ENCODE measurements at regions of chr1 and their contacts with region 1.

Region 1: GRCh38 chr1:201703621-201704439 is 125.1 kb upstream of the IPO9 start:
- DNase-seq: peak; percentile 90
- H3K4me3 Mint-ChIP-seq: no peak overlapping the region
- H3K27ac Mint-ChIP-seq: peak overlapping the region; percentile 16
- H3K4me1 Mint-ChIP-seq: peaks cover 25% of the 10 kb centered on the region
- H3K27me3 Mint-ChIP-seq: no peaks in the 10 kb centered on the region
- CTCF ChIP-seq: peak; percentile 100

Region 2: GRCh38 chr1:201530741-201531531 is 172.9 kb before region 1 on chr1:
- CTCF ChIA-PET with region 1: interaction called, 241 read pairs
- POLR2A ChIA-PET with region 1: interaction called, 5 read pairs
- intact Hi-C with region 1: loop called (anchors 1 kb)
- DNase-seq: peak; percentile 91
- H3K4me3 Mint-ChIP-seq: no peak overlapping the region
- H3K27ac Mint-ChIP-seq: peak overlapping the region; percentile 46
- H3K4me1 Mint-ChIP-seq: peaks cover 9% of the 10 kb centered on the region
- H3K27me3 Mint-ChIP-seq: no peaks in the 10 kb centered on the region
- CTCF ChIP-seq: peak; percentile 99

Region 3: GRCh38 chr1:201570886-201571624 is 132.8 kb before region 1 on chr1:
- CTCF ChIA-PET with region 1: interaction called, 779 read pairs
- POLR2A ChIA-PET with region 1: no interaction called
- intact Hi-C with region 1: no loop called
- DNase-seq: no peak
- H3K4me3 Mint-ChIP-seq: no peak overlapping the region
- H3K27ac Mint-ChIP-seq: no peak overlapping the region
- H3K4me1 Mint-ChIP-seq: peaks cover 5% of the 10 kb centered on the region
- H3K27me3 Mint-ChIP-seq: no peaks in the 10 kb centered on the region
- CTCF ChIP-seq: no peak

Region 4: DNA sequence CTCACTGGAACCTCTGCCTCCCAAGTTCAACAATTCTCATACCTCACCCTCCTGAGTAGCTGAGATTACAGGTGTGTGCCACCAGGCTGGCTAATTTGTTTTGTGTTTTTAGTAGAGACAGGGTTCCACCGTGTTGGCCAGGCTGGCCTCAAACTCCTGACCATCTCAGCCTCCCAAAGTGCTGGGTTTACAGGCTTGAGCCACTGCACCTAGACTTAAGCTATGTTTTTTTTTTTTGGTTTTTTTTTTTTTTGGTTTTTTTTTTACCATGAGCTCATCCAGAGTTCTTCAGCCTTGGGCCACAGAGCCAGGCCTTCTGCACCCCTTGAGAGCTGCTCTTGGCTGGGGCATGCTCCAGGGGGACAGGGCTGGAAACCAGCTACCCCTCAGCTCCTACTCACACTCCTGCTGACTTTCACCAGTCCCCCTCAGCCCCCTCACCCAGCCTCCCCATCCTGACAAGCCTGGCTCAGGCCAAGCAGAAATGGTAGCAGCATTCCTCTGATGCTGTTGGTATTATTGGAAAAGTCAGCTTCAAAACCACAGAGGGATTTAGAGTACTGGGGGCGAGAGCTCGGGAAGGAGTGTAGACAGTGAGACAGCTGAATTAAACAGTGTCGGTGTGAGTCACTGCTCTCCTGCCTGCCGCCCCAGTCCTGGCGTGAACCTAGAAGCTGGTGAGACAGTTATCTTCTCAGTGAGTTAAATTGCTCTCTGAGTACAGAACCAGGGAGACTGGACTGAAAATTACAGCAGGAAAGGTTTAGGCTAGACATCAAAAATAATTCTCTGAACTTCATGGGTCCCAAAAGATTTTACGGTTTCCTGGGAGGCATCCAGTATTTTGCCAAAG is 101.2 kb before region 1 on chr1:
- CTCF ChIA-PET with region 1: interaction called, 21 read pairs
- POLR2A ChIA-PET with region 1: no interaction called
- intact Hi-C with region 1: no loop called
- DNase-seq: peak; percentile 92
- H3K4me3 Mint-ChIP-seq: no peak overlapping the region
- H3K27ac Mint-ChIP-seq: no peak overlapping the region
- H3K4me1 Mint-ChIP-seq: peaks cover 37% of the 10 kb centered on the region
- H3K27me3 Mint-ChIP-seq: no peaks in the 10 kb centered on the region
- CTCF ChIP-seq: no peak

Region 5: DNA sequence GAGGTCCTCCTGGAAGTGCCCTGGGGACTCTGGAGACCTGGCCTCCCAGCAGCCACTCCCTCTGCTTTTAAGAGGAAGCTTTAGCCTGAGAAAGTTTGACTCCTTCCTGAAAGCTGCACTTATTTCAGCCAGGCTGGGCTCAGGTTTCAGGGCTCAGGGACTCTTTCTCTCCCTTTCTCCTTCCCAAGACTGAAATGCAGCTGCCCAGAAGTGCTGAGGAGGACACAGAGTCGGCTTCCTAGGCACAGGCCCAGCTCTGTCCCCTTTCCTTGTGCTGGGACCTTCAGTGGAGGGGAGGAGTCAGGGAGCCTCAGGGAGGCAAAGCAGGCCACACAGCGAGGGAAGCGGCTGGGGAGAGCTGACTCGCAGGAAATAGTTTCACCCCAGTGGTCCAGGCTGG is 27.6 kb before region 1 on chr1:
- CTCF ChIA-PET with region 1: interaction called, 15 read pairs
- POLR2A ChIA-PET with region 1: no interaction called
- intact Hi-C with region 1: no loop called
- DNase-seq: peak; percentile 42
- H3K4me3 Mint-ChIP-seq: no peak overlapping the region
- H3K27ac Mint-ChIP-seq: no peak overlapping the region
- H3K4me1 Mint-ChIP-seq: peaks cover 6% of the 10 kb centered on the region
- H3K27me3 Mint-ChIP-seq: no peaks in the 10 kb centered on the region
- CTCF ChIP-seq: no peak

Region 6: GRCh38 chr1:201792534-201793305 is 88.9 kb after region 1 on chr1:
- CTCF ChIA-PET with region 1: interaction called, 1,744 read pairs
- POLR2A ChIA-PET with region 1: interaction called, 168 read pairs
- intact Hi-C with region 1: loop called (anchors 1 kb)
- DNase-seq: peak; percentile 96
- H3K4me3 Mint-ChIP-seq: no peak overlapping the region
- H3K27ac Mint-ChIP-seq: no peak overlapping the region
- H3K4me1 Mint-ChIP-seq: peaks cover 32% of the 10 kb centered on the region
- H3K27me3 Mint-ChIP-seq: no peaks in the 10 kb centered on the region
- CTCF ChIP-seq: peak; percentile 100